Activated T-helper 1 cell treated with anti-CD3 and anti-CD28 coated beads, Interleukin-12 subunit alpha, Interleukin-12 subunit beta, Interleukin-2, Interleukin-4 antibody, amounts not matched to agents 30 ng/mL and 10 ng/mL and 1 ng/mL, durations not matched to agents 14 hours and 24 hours and 36 hours (primary cell): ENCODE measurements at regions of chr11 and their contacts with region 1.

Region 1: DNA sequence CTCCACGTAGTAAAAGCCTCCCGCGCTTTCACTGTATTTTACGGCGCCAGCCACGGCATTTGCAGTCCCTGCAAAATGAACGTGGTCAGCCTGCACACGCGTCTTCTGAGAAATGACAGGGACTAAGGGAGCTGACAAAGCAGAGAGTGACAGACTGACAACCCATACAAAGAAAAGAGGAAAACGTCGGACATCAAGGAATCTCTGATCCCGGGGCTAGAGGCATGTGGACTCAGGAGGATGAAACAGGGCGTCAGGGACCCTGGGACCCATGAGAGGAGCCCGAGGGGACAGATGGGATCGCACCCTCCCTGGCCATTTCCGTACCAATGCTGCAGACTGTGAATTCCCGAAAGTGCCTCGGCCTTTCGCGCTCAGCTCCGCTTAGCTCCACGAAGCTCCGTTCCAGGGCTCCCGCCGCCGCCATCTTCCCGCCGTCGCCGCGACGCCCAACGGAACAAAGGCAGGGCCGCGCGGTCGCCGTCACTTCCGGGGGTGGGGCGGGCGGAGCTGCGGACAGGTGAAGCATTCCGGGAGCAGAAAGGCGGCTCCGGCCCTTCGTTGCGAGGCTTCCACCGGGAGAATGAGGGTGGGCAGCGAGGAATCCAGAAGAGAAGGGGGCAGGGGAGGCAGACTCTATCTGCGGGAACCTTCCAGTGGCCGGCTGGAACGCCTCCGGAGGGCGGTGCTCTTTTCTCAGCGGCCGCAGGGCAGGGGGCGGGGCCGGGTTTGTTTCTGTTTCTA is at the start of gene NUP160:
- DNase-seq: peak; percentile 86
- H3K4me3 Mint-ChIP-seq: peak within 1 kb of the TSS; percentile 98
- H3K27ac Mint-ChIP-seq: peak within 1 kb of the TSS; percentile 100
- H3K4me1 Mint-ChIP-seq: peaks cover 47% of the 10 kb centered on the region
- H3K27me3 Mint-ChIP-seq: no peaks in the 10 kb centered on the region
- total RNA-seq, gene NUP160: 91.9 and 98.6 TPM in 2 replicates

Region 2: DNA sequence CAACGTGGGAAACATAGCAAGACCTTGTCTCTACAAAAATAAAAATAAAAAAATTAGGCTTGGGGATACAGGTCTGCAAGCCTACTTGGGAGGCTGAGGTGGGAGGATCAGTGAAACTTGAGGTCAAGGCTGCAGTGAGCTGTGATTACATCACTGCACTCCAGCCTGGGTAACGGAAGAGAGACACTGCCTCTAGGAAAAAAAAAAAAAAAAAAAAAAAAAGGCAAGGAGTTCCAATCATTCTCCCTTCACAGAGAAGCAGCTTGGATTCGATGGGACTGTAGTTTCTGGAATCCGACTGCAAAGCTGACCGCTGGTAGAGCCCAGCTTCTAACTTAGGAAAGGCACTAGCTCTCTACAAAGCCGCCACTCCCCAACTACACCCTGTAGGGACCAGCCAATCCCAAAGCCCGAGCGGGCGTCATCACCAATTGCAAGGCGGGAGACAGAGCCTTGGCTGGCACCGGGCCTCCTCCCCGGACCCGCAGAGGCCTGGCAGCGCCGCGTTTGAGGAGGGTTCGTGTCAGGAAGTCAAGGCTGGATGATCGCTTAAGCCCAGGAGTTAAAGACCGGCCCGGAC is 634.0 kb before region 1 on chr11:
- intact Hi-C with region 1: loop called (anchors 5 kb)
- DNase-seq: peak; percentile 77
- H3K4me3 Mint-ChIP-seq: peak overlapping the region; percentile 96
- H3K27ac Mint-ChIP-seq: peak overlapping the region; percentile 100
- H3K4me1 Mint-ChIP-seq: peaks cover 45% of the 10 kb centered on the region
- H3K27me3 Mint-ChIP-seq: peaks cover 2% of the 10 kb centered on the region

Region 3: GRCh38 chr11:47305734-47306483 is 542.2 kb before region 1 on chr11:
- intact Hi-C with region 1: no loop called
- DNase-seq: no peak
- H3K4me3 Mint-ChIP-seq: no peak overlapping the region
- H3K27ac Mint-ChIP-seq: no peak overlapping the region
- H3K4me1 Mint-ChIP-seq: peaks cover 10% of the 10 kb centered on the region
- H3K27me3 Mint-ChIP-seq: no peaks in the 10 kb centered on the region

Region 4: DNA sequence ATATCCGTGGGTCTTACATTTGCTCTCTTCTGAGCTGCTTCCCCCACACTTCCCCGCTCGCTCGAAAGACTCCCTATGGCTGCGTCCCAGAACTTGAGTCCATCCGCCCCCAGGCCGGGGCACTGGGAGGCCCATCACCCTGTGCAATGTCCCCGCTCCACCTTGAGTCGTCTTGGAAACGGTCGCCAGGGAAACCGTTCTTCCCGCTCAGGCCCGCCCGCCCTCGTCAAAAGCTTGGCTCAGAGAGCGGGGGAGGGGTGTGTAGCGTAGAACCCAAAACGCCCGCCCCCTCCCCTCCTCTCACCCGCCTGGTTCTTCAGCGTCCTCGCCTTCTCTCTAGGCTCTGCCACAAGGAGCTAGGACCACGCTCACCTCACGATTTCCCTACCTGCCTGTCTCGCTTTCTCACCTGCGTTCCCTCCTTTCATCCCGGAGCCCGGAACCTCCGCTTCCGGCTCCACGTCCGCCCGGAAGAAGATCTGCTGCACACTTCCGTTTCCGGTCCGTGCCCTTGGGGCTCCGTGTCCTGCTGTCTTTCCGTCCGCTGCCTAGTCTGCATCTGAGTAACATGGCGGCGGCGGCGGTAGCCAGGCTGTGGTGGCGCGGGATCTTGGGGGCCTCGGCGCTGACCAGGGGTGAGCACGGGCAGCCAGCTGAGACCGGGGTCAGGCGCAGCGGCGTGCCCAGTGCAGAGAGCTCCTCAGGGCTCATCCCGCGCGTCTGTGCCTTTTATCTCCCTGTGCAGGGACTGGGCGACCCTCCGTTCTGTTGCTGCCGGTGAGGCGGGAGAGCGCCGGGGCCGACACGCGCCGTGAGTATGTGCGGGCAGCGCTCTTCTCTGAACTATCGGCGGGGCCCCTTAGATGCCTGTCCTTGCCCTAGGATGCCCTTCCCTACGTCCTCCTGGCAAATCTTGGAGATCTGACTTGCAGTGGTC is 269.3 kb before region 1 on chr11 and contains the starts of genes KBTBD4 and NDUFS3:
- intact Hi-C with region 1: loop called (anchors 2 kb)
- DNase-seq: peak; percentile 89
- H3K4me3 Mint-ChIP-seq: peak within 1 kb of the TSS; percentile 96
- H3K27ac Mint-ChIP-seq: peak within 1 kb of the TSS; percentile 98
- H3K4me1 Mint-ChIP-seq: peaks cover 35% of the 10 kb centered on the region
- H3K27me3 Mint-ChIP-seq: no peaks in the 10 kb centered on the region
- total RNA-seq, gene KBTBD4: 16.3 and 19.0 TPM in 2 replicates
- total RNA-seq, gene NDUFS3: 148 and 152 TPM in 2 replicates

Region 5: DNA sequence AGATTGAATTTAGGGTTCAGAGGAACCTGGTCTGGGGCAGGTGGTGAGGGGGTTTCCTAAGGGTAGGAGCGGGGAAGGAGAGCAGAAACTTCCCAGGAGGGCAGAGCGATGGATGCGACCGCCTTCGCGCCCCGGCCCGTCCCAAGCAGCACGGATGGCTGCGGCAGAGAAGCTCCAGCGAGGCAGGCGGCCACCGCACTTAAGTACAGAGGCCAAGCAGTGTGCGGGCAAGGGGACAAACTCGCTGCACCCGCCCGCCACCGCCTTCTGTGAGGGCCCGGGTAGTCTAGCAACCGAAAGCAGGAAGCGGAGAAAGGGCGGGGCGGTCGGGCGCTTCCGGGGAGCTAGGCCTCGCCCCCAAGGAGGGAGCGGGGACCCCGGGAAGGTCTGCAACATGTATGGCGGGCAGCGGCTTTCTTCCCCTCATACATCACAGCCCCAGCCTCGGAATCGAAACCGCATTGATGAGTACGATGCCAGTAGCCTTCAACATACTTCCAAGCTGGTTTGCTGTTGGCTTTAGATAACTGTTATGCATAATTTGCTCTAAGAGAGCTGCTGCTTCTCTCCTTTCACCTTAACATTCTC is 132.9 kb before region 1 on chr11 and contains the start of gene AGBL2:
- intact Hi-C with region 1: loop called (anchors 2 kb)
- DNase-seq: peak; percentile 84
- H3K4me3 Mint-ChIP-seq: peak within 1 kb of the TSS; percentile 93
- H3K27ac Mint-ChIP-seq: peak within 1 kb of the TSS; percentile 96
- H3K4me1 Mint-ChIP-seq: peaks cover 31% of the 10 kb centered on the region
- H3K27me3 Mint-ChIP-seq: no peaks in the 10 kb centered on the region
- total RNA-seq, gene AGBL2: 3.2 and 5.5 TPM in 2 replicates

Region 6: GRCh38 chr11:47863189-47863892 is 15.3 kb after region 1 on chr11:
- intact Hi-C with region 1: loop called (anchors 2 kb)
- DNase-seq: no peak
- H3K4me3 Mint-ChIP-seq: peak overlapping the region; percentile 57
- H3K27ac Mint-ChIP-seq: peak overlapping the region; percentile 21
- H3K4me1 Mint-ChIP-seq: peaks cover 33% of the 10 kb centered on the region
- H3K27me3 Mint-ChIP-seq: no peaks in the 10 kb centered on the region

Region 7: GRCh38 chr11:48001438-48002021 is 153.5 kb after region 1 on chr11:
- intact Hi-C with region 1: loop called (anchors 5 kb)
- DNase-seq: peak; percentile 87
- H3K4me3 Mint-ChIP-seq: peak overlapping the region; percentile 72
- H3K27ac Mint-ChIP-seq: peak overlapping the region; percentile 97
- H3K4me1 Mint-ChIP-seq: peaks cover 82% of the 10 kb centered on the region
- H3K27me3 Mint-ChIP-seq: no peaks in the 10 kb centered on the region